ENCODE measurements at regions of chr12 and their contacts with region 1.

Region 1: DNA sequence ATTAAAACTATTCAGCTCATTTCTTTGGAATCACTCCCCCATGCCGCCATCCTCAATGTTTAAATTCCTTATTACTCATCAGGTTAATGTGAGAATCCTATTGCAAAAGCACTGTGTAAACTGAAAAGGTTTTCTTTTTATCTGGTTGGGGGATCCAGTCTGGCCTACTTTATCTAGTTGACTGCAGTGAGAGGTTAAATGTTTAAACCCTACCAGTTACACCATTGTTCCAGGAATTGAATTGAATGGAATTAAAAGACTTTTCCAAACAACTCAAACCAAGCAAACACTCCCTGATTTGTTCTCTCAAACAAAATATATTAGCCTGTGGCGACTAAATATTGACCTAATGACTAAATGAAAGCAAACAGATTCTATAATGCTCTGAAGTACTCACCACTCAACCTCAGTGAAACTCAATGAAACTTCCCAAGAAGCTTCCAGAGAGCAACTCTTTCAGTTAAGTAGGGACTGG is 100.5 kb downstream of the VEZT start:
- DNase-seq: no peak
- H3K4me3 ChIP-seq: no peak overlapping the region
- H3K27ac ChIP-seq: peak overlapping the region; percentile 26 to 66
- H3K4me1 ChIP-seq: no peaks in the 10 kb centered on the region
- H3K27me3 ChIP-seq: no peaks in the 10 kb centered on the region
- CTCF ChIP-seq: no peak
- POLR2A ChIP-seq: no peak

Region 2: DNA sequence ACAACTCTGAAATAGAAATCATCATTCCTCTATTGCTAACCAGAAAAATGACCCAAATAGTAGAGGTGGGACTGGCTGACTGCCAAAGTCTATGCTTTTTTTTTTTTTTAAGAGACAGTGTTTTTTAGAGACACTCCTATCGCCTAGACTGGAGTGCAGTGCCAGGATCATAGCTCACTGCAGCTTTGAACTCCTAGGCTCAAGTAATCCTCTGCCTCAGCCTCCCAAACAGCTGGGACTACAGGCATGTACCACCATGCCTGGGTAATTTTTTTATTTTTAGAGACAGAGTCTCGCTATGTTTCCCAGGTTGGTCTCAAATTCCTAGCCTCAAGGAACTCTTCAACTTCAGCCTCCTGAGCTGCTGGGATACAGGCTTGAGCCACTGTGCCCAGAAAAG is 263.9 kb before region 1 on chr12:
- intact Hi-C with region 1: no loop called
- DNase-seq: no peak
- H3K4me3 ChIP-seq: no peak overlapping the region
- H3K27ac ChIP-seq: no peak overlapping the region
- H3K4me1 ChIP-seq: no peaks in the 10 kb centered on the region
- H3K27me3 ChIP-seq: no peaks in the 10 kb centered on the region
- CTCF ChIP-seq: no peak
- POLR2A ChIP-seq: no peak

Region 3: DNA sequence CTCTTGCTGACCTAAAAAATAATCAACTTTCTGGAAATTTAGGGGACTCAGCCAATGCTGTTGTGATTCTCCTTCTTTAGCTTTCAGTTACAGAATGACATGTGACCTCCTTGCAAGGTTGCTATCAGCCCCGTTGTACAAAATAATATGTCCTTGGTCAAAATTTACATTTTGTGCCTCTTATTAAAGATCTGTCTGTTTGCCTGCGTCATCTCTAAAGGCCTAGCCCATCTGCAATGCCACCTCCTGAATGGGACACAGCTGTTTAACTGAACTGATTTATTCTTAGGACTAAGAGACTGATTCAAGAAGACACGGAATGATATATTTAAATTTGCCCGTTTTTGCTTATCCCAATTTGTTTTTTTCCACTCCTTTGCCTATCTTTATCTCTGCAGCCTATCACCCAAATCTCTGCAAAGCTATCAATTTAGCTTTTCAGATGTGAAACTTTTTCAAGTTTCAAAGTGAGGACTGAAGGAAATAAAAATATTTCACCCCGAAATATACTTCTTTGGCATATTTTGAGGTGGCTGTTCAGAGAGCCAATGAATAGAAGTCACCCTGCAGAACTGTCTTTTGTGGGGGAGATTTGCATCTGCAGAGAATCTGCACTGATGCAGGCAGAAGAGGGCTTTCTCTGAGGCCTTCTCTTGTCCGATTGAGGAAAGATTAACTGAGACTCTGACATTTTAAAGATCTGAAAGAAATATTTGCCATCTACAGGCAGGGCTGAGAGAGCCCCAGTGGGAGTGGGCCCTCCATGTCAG is 25.5 kb after region 1 on chr12:
- intact Hi-C with region 1: no loop called
- DNase-seq: no peak
- H3K4me3 ChIP-seq: no peak overlapping the region
- H3K27ac ChIP-seq: no peak overlapping the region
- H3K4me1 ChIP-seq: no peaks in the 10 kb centered on the region
- H3K27me3 ChIP-seq: no peaks in the 10 kb centered on the region
- CTCF ChIP-seq: no peak
- POLR2A ChIP-seq: no peak

Region 4: DNA sequence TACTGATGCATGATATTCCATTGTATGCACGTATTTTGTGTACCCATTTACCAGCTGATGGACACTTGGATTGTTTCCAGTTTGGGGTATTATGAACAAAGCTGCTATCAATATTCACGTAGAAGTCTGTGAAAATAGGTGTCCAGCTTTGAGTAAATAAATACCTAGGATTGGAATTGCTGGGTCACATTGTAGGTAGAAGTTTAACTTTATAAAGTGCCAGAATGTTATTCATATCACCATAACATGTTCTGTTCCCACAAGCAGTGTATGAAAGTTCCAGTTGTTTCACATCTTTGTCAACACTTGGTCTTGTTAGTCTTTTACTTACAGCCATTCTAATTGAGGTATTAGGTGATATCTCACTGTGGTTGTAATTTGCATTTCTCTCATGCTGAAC is 47.8 kb after region 1 on chr12:
- intact Hi-C with region 1: loop called (anchors 2 kb)
- DNase-seq: no peak
- H3K4me3 ChIP-seq: no peak overlapping the region
- H3K27ac ChIP-seq: no peak overlapping the region
- H3K4me1 ChIP-seq: no peaks in the 10 kb centered on the region
- H3K27me3 ChIP-seq: no peaks in the 10 kb centered on the region
- CTCF ChIP-seq: no peak
- POLR2A ChIP-seq: no peak